Sciatic nerve (tissue), 2 donors: ENCODE measurements at regions of chr1 and their contacts with region 1.

Region 1: DNA sequence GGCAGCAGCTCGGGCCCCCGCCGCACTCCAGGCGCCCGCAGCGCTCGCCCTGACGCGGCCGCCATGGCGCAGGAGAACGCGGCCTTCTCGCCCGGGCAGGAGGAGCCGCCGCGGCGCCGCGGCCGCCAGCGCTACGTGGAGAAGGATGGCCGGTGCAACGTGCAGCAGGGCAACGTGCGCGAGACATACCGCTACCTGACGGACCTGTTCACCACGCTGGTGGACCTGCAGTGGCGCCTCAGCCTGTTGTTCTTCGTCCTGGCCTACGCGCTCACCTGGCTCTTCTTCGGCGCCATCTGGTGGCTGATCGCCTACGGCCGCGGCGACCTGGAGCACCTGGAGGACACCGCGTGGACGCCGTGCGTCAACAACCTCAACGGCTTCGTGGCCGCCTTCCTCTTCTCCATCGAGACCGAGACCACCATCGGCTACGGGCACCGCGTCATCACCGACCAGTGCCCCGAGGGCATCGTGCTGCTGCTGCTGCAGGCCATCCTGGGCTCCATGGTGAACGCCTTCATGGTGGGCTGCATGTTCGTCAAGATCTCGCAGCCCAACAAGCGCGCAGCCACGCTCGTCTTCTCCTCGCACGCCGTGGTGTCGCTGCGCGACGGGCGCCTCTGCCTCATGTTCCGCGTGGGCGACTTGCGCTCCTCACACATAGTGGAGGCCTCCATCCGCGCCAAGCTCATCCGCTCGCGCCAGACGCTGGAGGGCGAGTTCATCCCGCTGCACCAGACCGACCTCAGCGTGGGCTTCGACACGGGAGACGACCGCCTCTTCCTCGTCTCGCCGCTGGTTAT is 2.8 kb downstream of the KCNJ9 start:
- DNase-seq: peak; percentile 77
- ATAC-seq: no peak

Region 2: GRCh38 chr1:160046494-160047110 is 37.6 kb before region 1 on chr1:
- intact Hi-C with region 1: loop called (anchors 5 kb)
- DNase-seq: peak; percentile 78
- ATAC-seq: peak; percentile 95